Psoas muscle (tissue), 8 donors: ENCODE measurements at regions of chr4 and their contacts with region 1.

Region 1: DNA sequence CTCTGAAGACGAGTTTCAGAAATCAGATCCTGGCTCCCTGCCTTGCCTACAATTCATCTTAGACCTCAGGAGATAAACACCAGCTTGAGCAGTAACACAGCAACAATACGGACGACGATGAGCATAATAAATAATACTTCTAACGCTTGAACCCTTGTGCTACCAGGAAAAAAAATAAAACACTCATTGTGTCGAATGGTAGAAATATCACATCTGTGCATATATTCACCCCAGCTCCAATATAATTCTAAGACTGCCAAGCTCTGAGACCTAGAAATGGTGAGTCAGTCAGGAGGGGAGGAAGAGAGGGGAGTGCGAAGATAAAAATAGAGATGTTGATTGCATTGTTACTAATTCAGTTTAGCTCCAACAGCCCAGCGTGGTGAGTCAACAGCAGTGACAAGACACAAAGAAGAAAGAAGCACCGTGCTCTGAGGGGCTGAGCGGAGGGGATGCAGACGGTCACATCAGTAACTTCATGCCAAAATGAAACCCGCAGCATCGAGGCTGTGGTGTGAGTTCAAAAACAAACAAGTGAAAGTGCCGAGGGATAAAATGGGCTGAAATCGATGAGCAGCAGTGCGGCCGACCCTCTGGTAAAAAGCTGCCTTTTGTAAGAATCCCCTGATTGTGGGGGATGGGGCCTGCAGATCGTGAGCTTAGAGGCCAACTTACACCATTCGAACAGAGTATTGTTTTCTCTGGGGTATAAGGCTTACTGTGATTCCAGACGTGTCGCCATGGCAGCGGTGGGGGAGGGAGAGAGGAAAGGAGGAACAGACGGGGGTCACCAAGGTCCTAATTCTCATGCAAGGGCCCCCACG is 150.4 kb downstream of the MGST2 start:
- DNase-seq: peak; percentile 56 to 78
- ATAC-seq: peak; percentile 90 to 93 (median 92)
- H3K4me3 ChIP-seq: peak overlapping the region; percentile 65
- H3K27ac ChIP-seq: peak overlapping the region; percentile 87
- H3K4me1 ChIP-seq: peaks cover 36% of the 10 kb centered on the region
- H3K27me3 ChIP-seq: no peaks in the 10 kb centered on the region
- CTCF ChIP-seq: no peak

Region 2: DNA sequence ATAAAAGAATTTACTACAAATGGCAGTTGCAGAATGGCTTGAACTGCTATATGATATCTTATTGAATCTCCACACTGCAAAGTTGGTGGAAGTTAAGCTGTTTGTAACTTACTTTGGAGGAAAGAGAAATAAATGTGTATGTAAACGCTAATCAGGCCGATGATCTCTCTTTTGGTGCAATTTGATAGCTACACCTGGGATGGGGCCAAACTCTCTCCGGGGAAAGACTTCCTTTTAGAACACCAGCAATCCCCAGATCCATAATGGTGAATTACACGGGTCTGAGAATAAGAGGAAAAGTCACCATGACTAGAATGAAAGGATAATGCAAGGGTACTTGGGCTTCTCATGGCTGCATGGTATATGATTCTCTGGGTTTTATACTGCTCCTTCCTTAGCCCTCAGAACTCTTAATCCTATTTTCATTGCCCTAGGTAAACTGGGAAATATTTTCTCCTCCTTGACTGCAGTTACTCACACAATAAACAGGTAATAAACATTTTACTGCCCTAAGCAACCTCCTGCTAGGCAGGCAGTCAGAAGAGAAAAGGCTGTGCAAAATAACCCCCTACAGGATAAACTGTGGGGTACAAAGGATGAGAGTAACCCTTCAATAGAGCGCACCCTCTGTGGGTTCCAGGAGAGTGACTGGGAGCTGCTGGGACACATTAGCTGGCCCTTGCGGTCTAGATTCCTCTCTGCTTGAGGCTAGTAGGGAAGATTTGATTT is 41.1 kb before region 1 on chr4:
- intact Hi-C with region 1: loop called in 1 of 2 experiments (anchors 5 kb)
- DNase-seq: no peak
- ATAC-seq: no peak
- H3K4me3 ChIP-seq: no peak overlapping the region
- H3K27ac ChIP-seq: no peak overlapping the region
- H3K4me1 ChIP-seq: peaks cover 30% of the 10 kb centered on the region
- H3K27me3 ChIP-seq: no peaks in the 10 kb centered on the region
- CTCF ChIP-seq: no peak

Region 3: DNA sequence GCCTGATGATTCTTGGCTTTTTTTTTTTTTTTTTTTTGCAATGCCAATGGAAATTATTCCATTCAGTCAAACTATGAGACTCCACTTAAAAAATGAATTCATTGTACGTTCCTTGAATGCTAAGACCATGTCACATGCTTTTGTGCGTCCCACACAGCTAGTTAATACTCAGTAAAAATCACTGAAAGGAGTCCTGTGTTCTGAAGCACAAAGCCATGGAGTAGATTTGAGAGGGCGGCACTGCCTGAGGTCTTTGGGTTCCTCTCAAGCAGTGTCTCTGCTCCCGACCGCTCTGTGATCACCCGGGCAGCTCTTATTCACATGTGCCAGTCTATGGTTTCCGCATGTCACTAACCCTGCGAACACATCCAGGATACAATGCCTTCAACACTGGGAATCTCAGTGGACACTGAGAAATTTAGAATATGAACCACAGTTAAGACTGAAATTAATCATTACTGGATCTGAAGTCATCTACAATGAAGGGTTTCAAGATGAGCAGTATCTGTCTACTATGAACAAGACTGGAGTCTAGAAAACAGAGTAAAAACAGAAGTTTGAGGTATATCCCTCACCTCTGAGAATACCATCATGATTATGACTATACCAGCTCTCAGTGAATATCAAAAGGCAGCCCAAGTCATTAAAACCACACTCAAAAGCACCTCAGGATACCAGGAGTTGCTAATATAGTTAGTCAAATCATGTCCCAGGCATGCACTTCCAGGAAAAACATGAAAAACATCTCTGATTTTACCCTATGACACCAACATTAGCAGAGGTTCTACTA is 42.6 kb after region 1 on chr4:
- intact Hi-C with region 1: no loop called
- DNase-seq: no peak
- ATAC-seq: no peak
- H3K4me3 ChIP-seq: no peak overlapping the region
- H3K27ac ChIP-seq: no peak overlapping the region
- H3K4me1 ChIP-seq: no peaks in the 10 kb centered on the region
- H3K27me3 ChIP-seq: no peaks in the 10 kb centered on the region
- CTCF ChIP-seq: no peak

Region 4: DNA sequence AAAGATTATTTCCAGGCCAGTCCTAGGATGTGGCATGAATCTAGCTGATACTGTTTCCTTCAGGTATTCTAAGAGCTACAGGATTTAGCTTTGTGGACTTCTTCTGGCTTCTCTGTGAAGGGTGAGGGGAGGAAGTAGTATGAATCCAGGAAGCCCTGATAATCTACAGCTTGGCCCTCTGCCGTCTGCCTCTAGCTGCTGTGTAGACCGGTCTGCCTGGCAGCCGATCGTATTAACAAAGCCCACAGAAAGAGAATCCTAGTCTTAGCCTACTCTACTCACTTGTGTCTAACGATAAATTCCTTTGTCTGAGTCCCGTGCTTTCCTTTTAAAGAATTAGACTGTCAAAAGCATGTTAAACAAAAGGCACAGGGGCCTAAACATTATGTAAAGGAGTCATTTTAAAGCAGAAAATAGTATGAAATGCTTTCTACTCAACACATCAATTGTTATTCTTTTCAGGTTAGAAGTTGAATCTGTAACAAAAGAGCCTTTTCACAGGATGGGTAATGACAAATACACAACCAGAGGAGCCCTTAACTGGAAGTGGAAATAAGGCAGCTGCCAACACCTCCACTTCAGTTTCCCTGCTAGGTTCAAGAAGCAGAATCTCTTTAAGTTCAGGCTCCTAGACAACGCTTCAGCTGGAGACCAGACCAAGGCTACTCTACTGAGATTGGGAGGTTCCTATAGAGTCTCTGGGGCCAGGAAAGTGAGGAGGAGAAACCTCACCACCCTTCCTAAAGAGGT is 801.7 kb after region 1 on chr4:
- intact Hi-C with region 1: no loop called
- DNase-seq: no peak
- ATAC-seq: no peak
- H3K4me3 ChIP-seq: no peak overlapping the region
- H3K27ac ChIP-seq: no peak overlapping the region
- H3K4me1 ChIP-seq: no peaks in the 10 kb centered on the region
- H3K27me3 ChIP-seq: no peaks in the 10 kb centered on the region
- CTCF ChIP-seq: no peak